ENCODE measurements at regions of chr3 and their contacts with region 1.

Region 1: DNA sequence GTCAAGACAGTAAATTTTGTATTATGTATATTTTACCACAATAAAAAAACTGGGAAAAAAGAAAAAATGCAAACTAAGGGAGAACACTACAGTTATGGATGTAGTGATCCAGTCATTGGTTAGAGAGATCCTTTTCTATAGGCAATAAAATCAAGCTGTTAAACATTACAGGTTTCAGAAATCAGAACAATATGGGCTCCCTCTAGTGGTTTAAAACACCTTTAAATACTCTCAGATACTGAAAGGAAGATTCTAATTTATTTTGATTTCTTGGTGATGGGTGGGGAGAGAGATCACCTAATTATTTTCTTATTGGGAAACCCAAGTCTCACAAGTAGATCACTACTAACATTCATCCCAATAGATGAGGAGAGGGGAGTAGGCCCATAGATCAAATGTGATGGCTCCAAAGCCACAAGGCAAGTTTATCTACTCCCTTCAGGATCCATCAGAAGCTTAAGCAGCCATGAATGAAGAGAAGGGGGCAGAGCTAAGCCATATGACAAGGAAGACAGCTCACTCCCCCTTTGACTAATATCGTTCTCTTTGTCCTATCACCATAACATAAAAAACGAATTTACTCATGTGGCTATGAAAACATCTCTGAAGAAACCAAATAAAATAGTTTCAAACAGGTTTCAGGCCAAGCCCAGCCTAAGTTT is 118.6 kb downstream of the ANO10 start:
- DNase-seq: no peak
- ATAC-seq: peak in 6 of 8 donors; percentile 23 to 52 (median 39)
- H3K4me3 ChIP-seq: no peak overlapping the region
- H3K27ac ChIP-seq: peak overlapping the region in 3 of 10 donors; percentile 8 to 24 (median 17)
- H3K4me1 ChIP-seq: peaks cover 0 to 35% (median 8%) of the 10 kb centered on the region in 9 donors
- H3K27me3 ChIP-seq: no peaks in the 10 kb centered on the region
- CTCF ChIP-seq: peak; percentile 45 to 78 (median 63)

Region 2: DNA sequence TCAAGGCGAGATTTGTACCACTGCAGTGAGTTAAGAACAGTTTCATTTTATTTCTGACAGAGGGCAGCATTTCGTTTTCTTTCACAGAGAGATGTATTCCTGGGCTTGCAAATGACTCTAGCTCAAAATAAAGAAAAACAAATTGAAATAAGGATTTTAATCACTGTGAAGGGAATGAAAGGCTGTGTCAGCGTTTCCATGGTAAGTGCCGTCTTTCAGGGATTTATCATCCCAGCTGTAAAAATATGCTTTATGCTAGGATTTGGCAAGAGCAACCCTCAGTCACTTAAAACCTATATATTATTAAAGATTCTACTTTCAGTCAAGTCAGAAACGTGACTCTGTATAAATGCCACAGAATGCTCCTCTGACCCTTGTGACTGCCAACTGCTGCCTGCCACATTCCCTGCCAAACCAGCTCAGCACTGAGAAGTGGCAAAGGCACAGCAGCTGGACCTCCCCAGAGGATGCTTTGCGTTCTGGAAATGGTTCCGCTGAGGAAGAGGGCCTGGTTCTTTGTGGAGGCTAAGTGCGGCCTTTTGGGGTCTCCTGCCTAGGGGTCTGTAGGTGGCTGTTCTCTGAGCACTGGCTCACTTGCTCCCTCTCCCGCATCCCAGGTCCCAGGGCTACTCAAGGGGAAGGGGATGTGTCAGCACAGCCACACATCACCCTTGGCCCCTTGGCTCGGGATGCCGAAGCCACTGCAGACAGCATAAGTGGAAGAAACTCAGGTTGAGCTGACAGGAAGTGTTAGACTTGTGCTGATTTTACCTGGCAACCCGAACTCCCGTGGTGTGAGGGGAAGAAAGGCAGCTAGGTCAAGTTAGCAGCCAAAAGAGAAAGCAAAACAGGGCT is 340.7 kb before region 1 on chr3:
- intact Hi-C with region 1: loop called in 9 of 10 experiments (anchors 1 to 5 kb)
- DNase-seq: no peak
- ATAC-seq: peak; percentile 25 to 91 (median 80)
- H3K4me3 ChIP-seq: peak overlapping the region in 6 of 10 donors; percentile 15 to 24 (median 19)
- H3K27ac ChIP-seq: peak overlapping the region in 8 of 10 donors; percentile 3 to 81 (median 63)
- H3K4me1 ChIP-seq: peaks cover 0 to 20% (median 12%) of the 10 kb centered on the region in 9 donors
- H3K27me3 ChIP-seq: no peaks in the 10 kb centered on the region
- CTCF ChIP-seq: peak; percentile 20 to 75 (median 57)

Region 3: DNA sequence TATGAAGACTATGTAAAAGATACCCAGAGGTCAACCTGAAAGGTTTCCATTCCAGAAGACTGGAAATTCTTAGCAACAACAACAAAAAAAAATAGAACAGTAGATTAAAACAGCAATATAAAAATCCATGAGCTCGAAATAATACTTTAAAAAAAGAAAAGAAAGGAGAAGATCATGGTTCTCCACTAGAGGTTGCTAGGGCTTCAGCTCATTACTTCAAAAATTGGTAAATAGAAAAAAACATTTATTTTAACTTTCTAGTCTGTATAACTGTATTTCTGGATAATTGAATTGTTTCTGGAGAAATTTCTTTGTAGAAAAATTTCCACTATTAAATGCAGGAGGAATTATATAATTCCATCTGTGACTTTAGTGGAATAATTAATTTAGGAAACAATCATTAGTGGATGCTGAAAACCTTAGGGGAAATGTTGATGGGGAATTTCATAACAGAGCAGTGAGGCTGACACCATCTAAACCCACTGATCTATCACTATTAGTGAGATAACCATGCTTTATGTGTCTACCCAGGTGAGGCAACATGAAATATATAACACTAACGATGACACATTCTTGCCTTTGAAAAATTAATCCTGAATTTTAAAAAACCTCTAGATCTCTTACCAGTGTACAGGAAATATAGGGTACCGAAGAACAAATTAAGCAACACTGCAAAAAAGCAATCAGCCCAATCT is 279.4 kb before region 1 on chr3:
- intact Hi-C with region 1: loop called in 7 of 10 experiments (anchors 5 to 10 kb)
- DNase-seq: no peak
- ATAC-seq: peak in 1 of 8 donors; percentile 45
- H3K4me3 ChIP-seq: no peak overlapping the region
- H3K27ac ChIP-seq: no peak overlapping the region
- H3K4me1 ChIP-seq: no peaks in the 10 kb centered on the region
- H3K27me3 ChIP-seq: no peaks in the 10 kb centered on the region
- CTCF ChIP-seq: peak in 8 of 9 donors; percentile 21 to 72 (median 52)

Region 4: GRCh38 chr3:43326891-43327581 is 176.2 kb before region 1 on chr3:
- intact Hi-C with region 1: loop called in 1 of 10 experiments (anchors 10 kb)
- DNase-seq: no peak
- ATAC-seq: peak; percentile 62 to 88 (median 74)
- H3K4me3 ChIP-seq: no peak overlapping the region
- H3K27ac ChIP-seq: peak overlapping the region; percentile 10 to 86 (median 75)
- H3K4me1 ChIP-seq: peaks cover 4 to 86% (median 64%) of the 10 kb centered on the region in 9 donors
- H3K27me3 ChIP-seq: no peaks in the 10 kb centered on the region
- CTCF ChIP-seq: no peak

Region 5: GRCh38 chr3:43378066-43378935 is 124.9 kb before region 1 on chr3:
- intact Hi-C with region 1: loop called in 2 of 10 experiments (anchors 10 kb)
- DNase-seq: no peak
- ATAC-seq: peak in 5 of 8 donors; percentile 25 to 48 (median 44)
- H3K4me3 ChIP-seq: no peak overlapping the region
- H3K27ac ChIP-seq: peak overlapping the region in 4 of 10 donors; percentile 2 to 47 (median 20)
- H3K4me1 ChIP-seq: peaks cover 0 to 26% (median 16%) of the 10 kb centered on the region in 9 donors
- H3K27me3 ChIP-seq: no peaks in the 10 kb centered on the region
- CTCF ChIP-seq: peak; percentile 21 to 69 (median 57)

Region 6: DNA sequence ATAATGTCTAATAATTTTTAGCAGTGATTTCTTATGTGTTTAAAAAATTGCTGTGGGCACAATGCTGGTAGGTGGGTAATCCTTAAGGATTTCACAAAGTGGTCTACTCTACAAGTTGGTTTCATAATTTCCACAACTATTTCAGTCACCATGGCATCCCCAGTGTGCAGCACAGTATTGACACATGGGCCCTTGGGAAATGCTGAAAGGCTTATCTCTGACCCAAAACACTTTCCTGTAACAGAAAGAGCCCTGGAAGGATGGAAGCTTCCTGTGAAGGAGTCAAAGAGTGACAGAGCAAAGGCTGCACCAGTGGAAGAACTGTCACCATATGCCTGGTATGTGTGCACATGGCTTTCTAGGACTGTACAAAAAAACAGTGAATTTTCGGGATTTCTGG is 35.1 kb before region 1 on chr3:
- intact Hi-C with region 1: no loop called
- DNase-seq: no peak
- ATAC-seq: peak in 4 of 8 donors; percentile 31 to 43 (median 38)
- H3K4me3 ChIP-seq: no peak overlapping the region
- H3K27ac ChIP-seq: no peak overlapping the region
- H3K4me1 ChIP-seq: peaks cover 0 to 11% (median 4%) of the 10 kb centered on the region in 9 donors
- H3K27me3 ChIP-seq: no peaks in the 10 kb centered on the region
- CTCF ChIP-seq: no peak

Region 7: DNA sequence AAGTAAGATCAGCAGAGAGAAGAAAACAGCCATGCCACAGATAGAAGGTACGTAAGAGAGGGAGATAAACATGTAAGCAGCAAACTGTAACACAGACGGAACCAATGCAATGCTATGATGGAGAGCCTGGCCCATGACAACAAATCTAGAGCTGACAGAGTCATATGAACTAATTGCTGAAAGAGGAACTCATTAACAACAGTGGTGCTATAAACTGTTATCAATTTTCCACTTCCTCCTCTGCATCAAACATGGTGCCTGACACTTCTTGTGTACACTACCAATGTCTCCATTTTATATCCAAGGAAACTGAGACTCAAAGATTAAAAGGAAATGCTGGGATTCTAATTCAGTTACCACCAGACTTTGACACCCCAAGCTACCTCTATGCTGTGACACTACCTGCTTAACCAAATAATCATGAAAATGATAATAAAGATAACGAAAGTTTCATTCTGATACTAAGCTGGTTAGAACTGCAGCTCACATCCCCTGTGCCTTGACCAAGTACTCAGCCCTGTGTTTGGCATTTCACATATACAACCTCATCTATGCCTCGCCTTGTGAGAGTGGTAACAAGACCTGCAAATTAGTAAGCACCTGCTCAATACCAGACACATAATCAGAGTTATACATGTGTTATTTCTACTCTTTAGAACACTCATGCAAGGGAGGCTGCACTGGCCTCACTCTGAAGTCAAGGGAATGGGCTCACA is 39.3 kb after region 1 on chr3:
- intact Hi-C with region 1: no loop called
- DNase-seq: no peak
- ATAC-seq: no peak
- H3K4me3 ChIP-seq: no peak overlapping the region
- H3K27ac ChIP-seq: no peak overlapping the region
- H3K4me1 ChIP-seq: no peaks in the 10 kb centered on the region
- H3K27me3 ChIP-seq: no peaks in the 10 kb centered on the region
- CTCF ChIP-seq: no peak

Region 8: GRCh38 chr3:43597961-43598360 is 94.8 kb after region 1 on chr3:
- intact Hi-C with region 1: no loop called
- DNase-seq: no peak
- ATAC-seq: no peak
- H3K4me3 ChIP-seq: no peak overlapping the region
- H3K27ac ChIP-seq: no peak overlapping the region
- H3K4me1 ChIP-seq: no peaks in the 10 kb centered on the region
- H3K27me3 ChIP-seq: no peaks in the 10 kb centered on the region
- CTCF ChIP-seq: no peak

Measured in heart right ventricle (tissue), 16 donors.